HepG2 (cell line): ENCODE measurements at regions of chr2 and their contacts with region 1.

Region 1: GRCh38 chr2:54904836-54905235 is 145.4 kb downstream of the RTN4 start:
- DNase-seq: peak; percentile 15
- ATAC-seq: peak; percentile 56
- H3K4me3 ChIP-seq: no peak overlapping the region
- H3K27ac ChIP-seq: no peak overlapping the region
- H3K4me1 ChIP-seq: peaks cover 35% of the 10 kb centered on the region
- H3K27me3 ChIP-seq: no peaks in the 10 kb centered on the region
- CTCF ChIP-seq: no peak
- EP300 ChIP-seq: no peak
- POLR2A ChIP-seq: no peak
- RAD21 ChIP-seq: no peak

Region 2: DNA sequence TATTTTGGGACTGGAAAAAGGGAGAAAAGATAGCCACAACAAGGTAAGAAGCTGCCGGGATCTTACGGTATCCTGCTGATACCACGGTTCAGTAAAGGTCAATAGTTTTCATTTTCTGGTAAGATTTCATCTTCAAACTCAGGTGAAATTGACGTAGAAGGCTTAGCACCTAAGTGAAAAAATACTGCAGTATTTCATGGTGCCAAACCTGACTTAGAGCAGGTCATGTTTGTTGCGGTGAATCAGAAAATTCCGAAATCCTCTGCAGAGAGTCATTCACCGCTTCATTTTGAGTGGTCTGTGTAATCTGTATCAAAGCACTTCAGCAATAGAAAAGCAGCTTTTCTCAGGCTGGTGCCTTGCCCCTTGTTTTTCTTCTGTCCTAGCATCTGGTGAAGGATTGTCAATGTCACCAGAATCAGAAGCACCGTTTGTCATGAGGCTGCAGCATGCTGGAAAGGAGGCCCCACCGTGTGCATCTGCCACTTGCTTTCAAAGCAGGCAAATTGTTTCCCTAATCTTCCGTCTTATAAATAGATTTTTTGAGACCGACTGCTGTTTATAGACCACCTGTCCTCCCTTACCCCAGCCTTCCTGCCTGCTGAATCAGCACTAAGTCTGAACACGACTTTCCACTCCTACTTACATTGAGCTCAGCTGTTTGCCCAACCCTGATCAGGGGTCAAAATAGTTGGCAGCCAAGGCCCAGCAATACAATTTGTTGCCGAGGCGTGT is 25.1 kb before region 1 on chr2:
- CTCF ChIA-PET with region 1: no interaction called
- POLR2A ChIA-PET with region 1: no interaction called
- in situ Hi-C with region 1: no loop called
- intact Hi-C with region 1: no loop called
- DNase-seq: no peak
- ATAC-seq: no peak
- H3K4me3 ChIP-seq: no peak overlapping the region
- H3K27ac ChIP-seq: no peak overlapping the region
- H3K4me1 ChIP-seq: peaks cover 14% of the 10 kb centered on the region
- H3K27me3 ChIP-seq: no peaks in the 10 kb centered on the region
- CTCF ChIP-seq: no peak
- EP300 ChIP-seq: no peak
- POLR2A ChIP-seq: no peak
- RAD21 ChIP-seq: no peak

Region 3: GRCh38 chr2:54927085-54927750 is 22.4 kb after region 1 on chr2:
- CTCF ChIA-PET with region 1: no interaction called
- POLR2A ChIA-PET with region 1: no interaction called
- in situ Hi-C with region 1: no loop called
- intact Hi-C with region 1: no loop called
- DNase-seq: no peak
- ATAC-seq: no peak
- H3K4me3 ChIP-seq: no peak overlapping the region
- H3K27ac ChIP-seq: no peak overlapping the region
- H3K4me1 ChIP-seq: no peaks in the 10 kb centered on the region
- H3K27me3 ChIP-seq: no peaks in the 10 kb centered on the region
- CTCF ChIP-seq: no peak
- EP300 ChIP-seq: no peak
- POLR2A ChIP-seq: no peak
- RAD21 ChIP-seq: no peak

Region 4: GRCh38 chr2:55175254-55176025 is 270.6 kb after region 1 on chr2:
- CTCF ChIA-PET with region 1: no interaction called
- POLR2A ChIA-PET with region 1: no interaction called
- in situ Hi-C with region 1: loop called (anchors 5 kb)
- intact Hi-C with region 1: no loop called
- DNase-seq: peak; percentile 41
- ATAC-seq: peak; percentile 68; the same call in 2 of the 3 replicates
- H3K4me3 ChIP-seq: no peak overlapping the region
- H3K27ac ChIP-seq: no peak overlapping the region
- H3K4me1 ChIP-seq: peaks cover 7% of the 10 kb centered on the region
- H3K27me3 ChIP-seq: no peaks in the 10 kb centered on the region
- CTCF ChIP-seq: peak; percentile 65
- EP300 ChIP-seq: no peak
- POLR2A ChIP-seq: no peak
- RAD21 ChIP-seq: peak; percentile 45